ENCODE measurements at regions of chr10 and their contacts with region 1.

Region 1: DNA sequence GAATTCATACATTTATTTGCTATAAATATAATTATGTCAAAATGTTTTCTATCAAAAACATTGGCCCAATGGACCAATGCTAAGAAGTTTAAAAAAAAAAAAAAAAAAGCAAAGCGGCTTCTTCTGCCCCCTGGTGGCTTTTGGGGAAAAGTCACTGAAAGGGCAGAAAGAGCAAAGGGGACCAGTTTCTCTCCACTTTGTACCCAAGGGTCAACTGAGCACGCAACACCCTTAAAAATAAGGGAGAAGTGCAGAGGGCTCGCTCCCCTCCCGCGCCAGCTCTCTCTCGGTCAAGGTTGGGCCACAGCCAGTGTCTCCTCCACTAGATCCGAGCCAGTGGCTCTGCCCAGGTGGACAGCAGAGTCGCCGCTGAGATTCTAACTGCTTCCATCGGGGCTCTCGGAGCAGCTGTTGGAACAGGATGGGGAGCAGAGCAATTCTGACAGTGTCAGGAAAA is 136.4 kb upstream of the FGFR2 start:
- DNase-seq: no peak
- H3K4me3 ChIP-seq: no peak overlapping the region
- H3K27ac ChIP-seq: no peak overlapping the region
- H3K4me1 ChIP-seq: no peaks in the 10 kb centered on the region
- H3K27me3 ChIP-seq: peaks cover 17% of the 10 kb centered on the region; the same call in 1 of the 2 replicates
- CTCF ChIP-seq: peak; percentile 69

Region 2: GRCh38 chr10:120423431-120424197 is 1311.0 kb before region 1 on chr10:
- CTCF ChIA-PET with region 1: no interaction called
- POLR2A ChIA-PET with region 1: no interaction called
- intact Hi-C with region 1: loop called (anchors 10 kb)
- DNase-seq: peak in 1 of 2 experiments; percentile 1
- H3K4me3 ChIP-seq: no peak overlapping the region
- H3K27ac ChIP-seq: no peak overlapping the region
- H3K4me1 ChIP-seq: no peaks in the 10 kb centered on the region
- H3K27me3 ChIP-seq: no peaks in the 10 kb centered on the region
- CTCF ChIP-seq: peak; percentile 66

Measured in PC-9 (cell line).